Testis (tissue), 5 donors: ENCODE measurements at regions of chr7 and their contacts with region 1.

Region 1: GRCh38 chr7:22488643-22489462 is 11.1 kb downstream of the STEAP1B start:
- DNase-seq: peak; percentile 83
- H3K4me3 ChIP-seq: no peak overlapping the region
- H3K27ac ChIP-seq: no peak overlapping the region
- H3K4me1 ChIP-seq: no peaks in the 10 kb centered on the region
- H3K27me3 ChIP-seq: no peaks in the 10 kb centered on the region
- CTCF ChIP-seq: peak; percentile 80 to 88 (median 87)
- POLR2A ChIP-seq: no peak

Region 2: GRCh38 chr7:22093001-22093400 is 395.9 kb before region 1 on chr7:
- intact Hi-C with region 1: no loop called
- DNase-seq: no peak
- H3K4me3 ChIP-seq: no peak overlapping the region
- H3K27ac ChIP-seq: no peak overlapping the region
- H3K4me1 ChIP-seq: peaks cover 6% of the 10 kb centered on the region
- H3K27me3 ChIP-seq: no peaks in the 10 kb centered on the region
- CTCF ChIP-seq: no peak
- POLR2A ChIP-seq: no peak

Region 3: GRCh38 chr7:22103255-22103969 is 385.4 kb before region 1 on chr7:
- intact Hi-C with region 1: loop called (anchors 5 kb)
- DNase-seq: peak; percentile 89
- H3K4me3 ChIP-seq: no peak overlapping the region
- H3K27ac ChIP-seq: no peak overlapping the region
- H3K4me1 ChIP-seq: no peaks in the 10 kb centered on the region
- H3K27me3 ChIP-seq: no peaks in the 10 kb centered on the region
- CTCF ChIP-seq: peak; percentile 61 to 68 (median 65)
- POLR2A ChIP-seq: no peak